BJ (cell line): ENCODE measurements at regions of chr1 and their contacts with region 1.

Region 1: GRCh38 chr1:18861082-18861481 is 1.6 kb upstream of the TAS1R2 start:
- DNase-seq: no peak
- H3K4me3 ChIP-seq: no peak overlapping the region
- H3K27me3 ChIP-seq: peaks cover 7% of the 10 kb centered on the region
- CTCF ChIP-seq: no peak

Region 2: GRCh38 chr1:18875107-18875795 is 14.2 kb after region 1 on chr1:
- CTCF ChIA-PET with region 1: interaction called, 12 read pairs
- POLR2A ChIA-PET with region 1: no interaction called
- DNase-seq: peak; percentile 21
- H3K4me3 ChIP-seq: no peak overlapping the region
- H3K27me3 ChIP-seq: no peaks in the 10 kb centered on the region
- CTCF ChIP-seq: peak; percentile 90